ENCODE measurements at regions of chr14 and their contacts with region 1.

Region 1: DNA sequence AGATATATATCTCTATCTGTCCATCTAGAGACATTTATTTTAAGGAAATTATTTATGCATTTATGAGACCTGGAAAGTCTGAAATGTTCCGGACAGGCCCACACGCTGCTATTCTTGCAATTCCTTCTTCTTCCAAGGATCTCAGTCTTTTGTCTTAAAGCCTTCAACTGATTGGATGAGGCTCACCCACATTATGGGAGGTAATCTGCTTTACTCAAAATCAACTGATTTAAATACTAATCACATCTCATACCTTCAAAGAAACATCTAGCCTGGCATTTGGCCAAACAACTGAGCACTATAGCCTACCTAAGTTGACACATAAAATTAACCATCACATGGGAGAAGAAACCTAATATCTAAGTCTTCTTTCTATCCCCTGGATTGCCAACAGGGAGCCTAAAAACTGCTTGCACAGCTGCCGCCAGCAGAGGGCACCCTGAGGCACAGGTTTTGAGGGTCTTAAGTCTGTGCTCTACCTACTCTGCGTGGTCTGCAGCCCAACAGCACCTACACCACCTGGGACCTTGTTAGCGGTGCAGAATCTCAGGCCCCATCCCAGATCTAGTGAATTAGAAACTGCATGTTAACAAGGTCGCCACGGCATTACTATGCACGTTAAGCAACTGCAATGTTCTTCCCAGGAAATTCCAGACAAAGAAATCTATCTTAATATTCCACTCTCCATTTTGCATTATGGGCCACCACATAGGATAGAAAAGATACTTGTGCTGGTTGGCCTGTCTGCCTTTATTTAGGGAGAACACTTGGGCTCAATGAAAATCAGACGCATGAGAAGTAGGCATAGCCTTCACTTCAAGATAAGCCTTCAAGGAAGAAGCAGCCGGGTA is 249.7 kb downstream of the FOXG1 start:
- DNase-seq: no peak
- ATAC-seq: no peak
- H3K4me3 Mint-ChIP-seq: no peak overlapping the region
- H3K27ac Mint-ChIP-seq: no peak overlapping the region
- H3K4me1 Mint-ChIP-seq: no peaks in the 10 kb centered on the region
- H3K27me3 Mint-ChIP-seq: no peaks in the 10 kb centered on the region
- CTCF ChIP-seq: no peak

Region 2: GRCh38 chr14:30005114-30005808 is 989.0 kb after region 1 on chr14:
- CTCF ChIA-PET with region 1: no interaction called
- POLR2A ChIA-PET with region 1: no interaction called
- intact Hi-C with region 1: loop called (anchors 5 kb)
- DNase-seq: no peak
- ATAC-seq: peak; percentile 61
- H3K4me3 Mint-ChIP-seq: no peak overlapping the region
- H3K27ac Mint-ChIP-seq: no peak overlapping the region
- H3K4me1 Mint-ChIP-seq: no peaks in the 10 kb centered on the region
- H3K27me3 Mint-ChIP-seq: no peaks in the 10 kb centered on the region
- CTCF ChIP-seq: peak; percentile 46

Measured in activated B cell treated with CpG ODN at 0.5 μM for 24 hours (primary cell).